ENCODE measurements at regions of chr20 and their contacts with region 1.

Region 1: GRCh38 chr20:62793912-62794724 is 2.2 kb upstream of the MRGBP start:
- DNase-seq: peak; percentile 98
- ATAC-seq: peak; percentile 78
- H3K4me3 ChIP-seq: peak overlapping the region; percentile 60 to 77 (median 69)
- H3K4me3 Mint-ChIP-seq: peak overlapping the region; percentile 77
- H3K27ac ChIP-seq: peak overlapping the region; percentile 91 to 93
- H3K27ac Mint-ChIP-seq: peak overlapping the region; percentile 64
- H3K4me1 ChIP-seq: peaks cover 14 to 45% of the 10 kb centered on the region in 2 donors
- H3K4me1 Mint-ChIP-seq: peaks cover 36% of the 10 kb centered on the region
- H3K27me3 ChIP-seq: no peaks in the 10 kb centered on the region
- H3K27me3 Mint-ChIP-seq: no peaks in the 10 kb centered on the region
- CTCF ChIP-seq: no peak

Region 2: DNA sequence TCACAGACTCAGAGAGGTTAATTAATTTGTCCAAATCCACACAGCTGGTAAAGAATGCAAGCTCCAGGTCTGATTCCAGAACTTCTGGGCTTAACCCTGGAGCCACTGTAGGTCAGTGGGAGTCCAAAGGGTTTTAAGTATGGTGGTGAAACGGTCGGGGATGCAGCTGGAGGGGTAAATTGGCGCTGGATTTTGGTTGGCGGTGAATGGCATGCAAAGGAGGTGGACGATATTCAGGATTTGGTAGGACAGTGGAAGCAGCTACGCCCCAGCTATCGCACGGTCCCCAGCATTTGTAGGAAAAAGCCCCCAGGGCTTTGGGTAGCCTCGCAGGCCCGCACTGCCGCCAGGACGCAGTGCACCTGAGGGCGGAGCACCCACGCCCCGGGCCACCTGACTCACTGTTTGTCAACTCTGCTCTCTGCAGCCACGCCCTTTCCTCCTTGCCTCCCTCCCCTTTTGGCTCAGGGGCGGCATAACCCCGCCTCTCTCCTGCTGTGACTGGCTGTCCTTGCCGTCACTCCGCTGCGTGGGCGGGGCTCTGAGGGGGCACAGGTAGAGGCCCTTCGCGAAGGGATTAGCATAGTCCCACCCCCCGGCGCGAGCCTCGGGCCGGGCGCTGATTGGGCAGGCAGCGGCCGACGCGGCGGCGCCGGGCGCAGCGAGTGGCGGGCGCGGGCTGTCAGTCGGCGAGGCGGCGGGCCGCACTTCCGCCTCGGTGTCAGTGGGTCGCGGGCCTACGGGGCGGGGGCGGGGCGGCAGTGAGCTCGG is 556.1 kb before region 1 on chr20 and contains the start of gene OSBPL2:
- CTCF ChIA-PET with region 1: no interaction called
- POLR2A ChIA-PET with region 1: no interaction called
- intact Hi-C with region 1: loop called (anchors 5 kb)
- DNase-seq: peak; percentile 100
- ATAC-seq: peak; percentile 98
- H3K4me3 ChIP-seq: peak within 1 kb of the TSS; percentile 46 to 74 (median 60)
- H3K4me3 Mint-ChIP-seq: peak within 1 kb of the TSS; percentile 90
- H3K27ac ChIP-seq: peak within 1 kb of the TSS; percentile 43 to 83
- H3K27ac Mint-ChIP-seq: peak within 1 kb of the TSS; percentile 96
- H3K4me1 ChIP-seq: peaks cover 17 to 22% of the 10 kb centered on the region in 2 donors
- H3K4me1 Mint-ChIP-seq: peaks cover 30% of the 10 kb centered on the region
- H3K27me3 ChIP-seq: peaks cover 0 to 17% (median 1%) of the 10 kb centered on the region in 4 experiments
- H3K27me3 Mint-ChIP-seq: peaks cover 7% of the 10 kb centered on the region
- CTCF ChIP-seq: no peak
- total RNA-seq, gene OSBPL2: 74.3 and 76.6 TPM in 2 replicates

Region 3: GRCh38 chr20:62407221-62407992 is 386.7 kb before region 1 on chr20 and contains the start of gene CABLES2:
- CTCF ChIA-PET with region 1: interaction called, 5 read pairs
- POLR2A ChIA-PET with region 1: no interaction called
- intact Hi-C with region 1: loop called (anchors 2 kb)
- DNase-seq: peak; percentile 95
- ATAC-seq: peak; percentile 90
- H3K4me3 ChIP-seq: peak within 1 kb of the TSS; percentile 36 to 71 (median 67)
- H3K4me3 Mint-ChIP-seq: peak within 1 kb of the TSS; percentile 90
- H3K27ac ChIP-seq: peak within 1 kb of the TSS; percentile 59 to 66
- H3K27ac Mint-ChIP-seq: peak within 1 kb of the TSS; percentile 87
- H3K4me1 ChIP-seq: peaks cover 30 to 41% of the 10 kb centered on the region in 2 donors
- H3K4me1 Mint-ChIP-seq: peaks cover 30% of the 10 kb centered on the region
- H3K27me3 ChIP-seq: no peaks in the 10 kb centered on the region
- H3K27me3 Mint-ChIP-seq: no peaks in the 10 kb centered on the region
- CTCF ChIP-seq: no peak
- total RNA-seq, gene CABLES2: 8.2 and 8.6 TPM in 2 replicates

Region 4: GRCh38 chr20:62623488-62624324 is 170.4 kb before region 1 on chr20:
- CTCF ChIA-PET with region 1: interaction called, 16 read pairs
- POLR2A ChIA-PET with region 1: interaction called, 7 read pairs
- intact Hi-C with region 1: loop called (anchors 1 kb)
- DNase-seq: peak; percentile 92
- ATAC-seq: peak; percentile 87
- H3K4me3 ChIP-seq: peak overlapping the region in 4 of 5 experiments; percentile 26 to 56 (median 49)
- H3K4me3 Mint-ChIP-seq: peak overlapping the region; percentile 85
- H3K27ac ChIP-seq: peak overlapping the region; percentile 77 to 94
- H3K27ac Mint-ChIP-seq: peak overlapping the region; percentile 98
- H3K4me1 ChIP-seq: peaks cover 45 to 50% of the 10 kb centered on the region in 2 donors
- H3K4me1 Mint-ChIP-seq: peaks cover 39% of the 10 kb centered on the region
- H3K27me3 ChIP-seq: no peaks in the 10 kb centered on the region
- H3K27me3 Mint-ChIP-seq: no peaks in the 10 kb centered on the region
- CTCF ChIP-seq: no peak

Region 5: GRCh38 chr20:62740286-62741141 is 53.6 kb before region 1 on chr20:
- CTCF ChIA-PET with region 1: interaction called, 3 read pairs
- POLR2A ChIA-PET with region 1: interaction called, 6 read pairs
- intact Hi-C with region 1: loop called (anchors 1 kb)
- DNase-seq: peak; percentile 65
- ATAC-seq: peak; percentile 76
- H3K4me3 ChIP-seq: peak overlapping the region in 4 of 5 experiments; percentile 26 to 53 (median 42)
- H3K4me3 Mint-ChIP-seq: peak overlapping the region; percentile 84
- H3K27ac ChIP-seq: peak overlapping the region; percentile 75 to 77
- H3K27ac Mint-ChIP-seq: peak overlapping the region; percentile 94
- H3K4me1 ChIP-seq: peaks cover 16 to 29% of the 10 kb centered on the region in 2 donors
- H3K4me1 Mint-ChIP-seq: peaks cover 34% of the 10 kb centered on the region
- H3K27me3 ChIP-seq: peaks cover 0 to 3% (median 0%) of the 10 kb centered on the region in 4 experiments
- H3K27me3 Mint-ChIP-seq: peaks cover 5% of the 10 kb centered on the region
- CTCF ChIP-seq: no peak

Region 6: GRCh38 chr20:62772990-62773844 is 20.9 kb before region 1 on chr20:
- CTCF ChIA-PET with region 1: no interaction called
- POLR2A ChIA-PET with region 1: no interaction called
- intact Hi-C with region 1: no loop called
- DNase-seq: no peak
- ATAC-seq: no peak
- H3K4me3 ChIP-seq: no peak overlapping the region
- H3K4me3 Mint-ChIP-seq: no peak overlapping the region
- H3K27ac ChIP-seq: no peak overlapping the region
- H3K27ac Mint-ChIP-seq: no peak overlapping the region
- H3K4me1 ChIP-seq: peaks cover 17 to 25% of the 10 kb centered on the region in 2 donors
- H3K4me1 Mint-ChIP-seq: peaks cover 22% of the 10 kb centered on the region
- H3K27me3 ChIP-seq: no peaks in the 10 kb centered on the region
- H3K27me3 Mint-ChIP-seq: peaks cover 6% of the 10 kb centered on the region
- CTCF ChIP-seq: no peak

Region 7: DNA sequence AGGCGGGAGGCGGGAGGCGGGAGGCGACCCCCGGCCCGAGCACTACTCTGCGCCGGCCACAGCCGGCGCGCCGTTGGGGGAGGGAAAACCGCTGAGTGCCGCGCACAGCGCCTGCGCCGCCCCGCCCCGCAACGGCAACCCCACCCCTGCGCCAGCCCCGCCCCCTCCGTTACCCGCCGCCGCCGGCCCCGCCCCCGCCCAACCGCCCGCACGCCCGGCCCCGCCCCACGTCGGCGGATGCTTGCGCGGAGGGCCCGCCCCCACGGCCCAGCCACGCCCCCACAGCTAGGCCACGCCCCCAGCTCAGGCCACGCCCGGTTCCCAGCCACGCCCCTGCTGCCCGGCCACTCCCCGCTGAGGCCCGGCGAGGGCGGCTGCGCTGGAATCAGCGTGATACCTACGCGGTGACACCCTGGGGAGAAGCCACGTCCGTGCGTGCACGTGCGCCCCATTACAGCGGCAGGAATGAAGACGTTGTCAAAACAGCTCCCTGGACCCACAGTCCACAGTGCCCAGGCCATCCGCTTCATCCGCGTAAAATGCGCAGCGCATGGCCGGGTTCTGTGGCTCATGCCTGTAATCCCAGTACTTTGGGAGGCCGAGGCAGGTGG is 67.7 kb after region 1 on chr20 and contains the start of gene TCFL5:
- CTCF ChIA-PET with region 1: interaction called, 3 read pairs
- POLR2A ChIA-PET with region 1: interaction called, 3 read pairs
- intact Hi-C with region 1: loop called (anchors 5 kb)
- DNase-seq: peak; percentile 95
- ATAC-seq: peak; percentile 92
- H3K4me3 ChIP-seq: peak within 1 kb of the TSS in 3 of 5 experiments; percentile 33 to 47 (median 36)
- H3K4me3 Mint-ChIP-seq: peak within 1 kb of the TSS; percentile 81
- H3K27ac ChIP-seq: no peak within 1 kb of the TSS
- H3K27ac Mint-ChIP-seq: peak within 1 kb of the TSS; percentile 42
- H3K4me1 ChIP-seq: peaks cover 9 to 27% of the 10 kb centered on the region in 2 donors
- H3K4me1 Mint-ChIP-seq: peaks cover 20% of the 10 kb centered on the region
- H3K27me3 ChIP-seq: peaks cover 0 to 9% (median 6%) of the 10 kb centered on the region in 4 experiments
- H3K27me3 Mint-ChIP-seq: no peaks in the 10 kb centered on the region
- CTCF ChIP-seq: no peak
- total RNA-seq, gene TCFL5: 15.7 and 16.2 TPM in 2 replicates

Region 8: GRCh38 chr20:63344616-63345327 is 550.7 kb after region 1 on chr20:
- CTCF ChIA-PET with region 1: no interaction called
- POLR2A ChIA-PET with region 1: no interaction called
- intact Hi-C with region 1: no loop called
- DNase-seq: no peak
- ATAC-seq: no peak
- H3K4me3 ChIP-seq: no peak overlapping the region
- H3K4me3 Mint-ChIP-seq: no peak overlapping the region
- H3K27ac ChIP-seq: no peak overlapping the region
- H3K27ac Mint-ChIP-seq: no peak overlapping the region
- H3K4me1 ChIP-seq: no peaks in the 10 kb centered on the region
- H3K4me1 Mint-ChIP-seq: no peaks in the 10 kb centered on the region
- H3K27me3 ChIP-seq: no peaks in the 10 kb centered on the region
- H3K27me3 Mint-ChIP-seq: peaks cover 12% of the 10 kb centered on the region
- CTCF ChIP-seq: no peak

Measured in B cell (primary cell).